HEK293T (cell line): ENCODE measurements at regions of chr1 and their contacts with region 1.

Region 1: DNA sequence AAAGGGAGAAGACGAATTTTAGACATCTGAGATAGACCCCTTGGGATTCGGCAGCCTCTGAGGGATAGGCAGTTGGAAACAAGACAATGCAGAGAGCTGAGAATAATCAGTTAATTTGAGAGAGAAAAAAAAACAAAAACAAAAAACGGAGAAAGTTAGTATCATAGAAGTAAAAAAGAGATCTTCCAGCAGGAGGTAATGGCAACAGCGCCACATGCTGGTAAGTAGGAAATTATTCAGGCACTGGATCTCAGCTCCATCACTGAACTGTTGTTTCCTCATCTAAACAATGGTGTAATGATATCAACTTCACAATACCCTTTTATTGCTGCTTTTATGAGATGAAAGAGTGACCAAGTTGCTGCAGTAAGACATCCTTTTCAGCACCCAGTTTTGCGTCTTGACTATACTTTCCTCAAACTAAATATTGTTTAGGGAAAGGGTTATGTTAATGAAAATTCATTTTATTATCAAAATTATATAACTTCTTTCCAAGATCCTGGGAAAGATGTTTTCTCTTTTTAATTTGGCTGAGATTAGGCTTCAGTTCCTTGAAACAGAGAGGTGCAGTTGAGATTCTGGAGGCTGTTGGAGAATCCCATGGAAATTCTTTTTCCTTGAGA is 91.4 kb upstream of the KCNA3 start:
- DNase-seq: peak; percentile 63

Region 2: DNA sequence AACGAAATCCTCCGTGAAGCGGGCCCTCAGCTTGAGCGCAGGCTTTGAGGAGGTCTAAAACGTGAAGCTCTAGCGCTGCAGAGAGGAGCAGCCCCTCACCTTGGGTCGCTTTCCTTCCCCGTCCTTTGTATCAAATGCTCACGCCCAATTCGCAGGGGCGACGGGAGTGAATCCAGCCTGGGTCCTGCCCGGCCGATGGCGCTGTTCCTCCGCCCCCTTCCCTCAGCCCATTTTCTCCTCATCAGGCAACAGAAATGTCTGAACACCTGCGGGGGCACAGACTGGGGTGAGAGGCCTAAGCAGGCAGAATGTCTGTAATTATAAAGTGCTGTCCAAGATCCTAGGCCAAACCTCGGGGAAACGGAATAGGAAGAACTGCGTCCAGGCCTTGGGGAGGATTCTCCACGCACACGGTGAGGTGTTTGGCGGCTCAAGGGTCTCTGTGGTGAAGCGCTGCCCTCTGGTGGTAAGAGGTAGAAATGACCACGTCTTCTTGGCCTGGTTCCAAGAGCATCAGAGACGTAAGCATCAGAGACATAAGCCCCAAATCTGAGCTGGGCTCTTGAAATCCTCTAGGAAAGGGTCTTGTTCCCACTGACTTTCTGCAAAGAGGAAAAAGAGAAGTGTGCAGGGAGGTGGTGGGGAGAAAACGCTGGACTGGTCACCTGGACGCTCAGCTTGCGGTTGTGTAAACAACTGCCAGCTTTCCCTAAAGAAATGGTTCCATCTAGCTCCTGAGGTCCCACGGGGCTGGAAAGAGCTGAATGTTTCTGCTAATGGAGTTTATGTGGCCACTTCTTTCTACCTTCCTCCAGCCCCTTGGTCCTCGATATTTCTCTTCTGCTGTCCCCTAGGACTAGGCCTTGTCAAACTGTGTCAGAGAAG is 14.7 kb after region 1 on chr1:
- CTCF ChIA-PET with region 1: interaction called, 10 read pairs
- POLR2A ChIA-PET with region 1: no interaction called
- DNase-seq: peak; percentile 85